Cardiac septum (tissue), 1 donor: ENCODE measurements at regions of chr10 and their contacts with region 1.

Region 1: DNA sequence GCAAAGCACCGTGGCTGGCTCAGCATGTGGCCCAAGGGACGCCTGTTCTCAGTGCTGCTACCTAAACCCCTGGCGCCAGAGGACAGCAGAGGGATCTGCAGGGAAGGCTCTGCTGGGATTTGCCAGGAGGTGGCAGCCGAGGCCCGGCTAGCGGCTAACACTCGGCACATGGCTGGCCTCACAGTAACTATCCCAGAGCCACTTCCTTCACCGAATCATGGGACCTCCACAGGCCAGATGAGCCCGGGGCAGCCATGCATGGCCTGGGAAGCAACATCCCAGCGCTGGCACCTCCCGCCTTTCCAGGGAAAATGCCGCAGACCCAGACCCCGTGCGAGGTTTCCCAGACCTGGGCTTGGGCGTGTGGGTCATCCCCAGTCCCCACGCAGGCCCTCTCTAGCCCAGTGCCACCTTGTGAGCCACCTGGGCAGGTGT is 36.4 kb downstream of the DPYSL4 start:
- DNase-seq: peak; percentile 88

Region 2: GRCh38 chr10:131722525-131723264 is 500.5 kb before region 1 on chr10:
- intact Hi-C with region 1: no loop called
- DNase-seq: peak; percentile 51

Region 3: DNA sequence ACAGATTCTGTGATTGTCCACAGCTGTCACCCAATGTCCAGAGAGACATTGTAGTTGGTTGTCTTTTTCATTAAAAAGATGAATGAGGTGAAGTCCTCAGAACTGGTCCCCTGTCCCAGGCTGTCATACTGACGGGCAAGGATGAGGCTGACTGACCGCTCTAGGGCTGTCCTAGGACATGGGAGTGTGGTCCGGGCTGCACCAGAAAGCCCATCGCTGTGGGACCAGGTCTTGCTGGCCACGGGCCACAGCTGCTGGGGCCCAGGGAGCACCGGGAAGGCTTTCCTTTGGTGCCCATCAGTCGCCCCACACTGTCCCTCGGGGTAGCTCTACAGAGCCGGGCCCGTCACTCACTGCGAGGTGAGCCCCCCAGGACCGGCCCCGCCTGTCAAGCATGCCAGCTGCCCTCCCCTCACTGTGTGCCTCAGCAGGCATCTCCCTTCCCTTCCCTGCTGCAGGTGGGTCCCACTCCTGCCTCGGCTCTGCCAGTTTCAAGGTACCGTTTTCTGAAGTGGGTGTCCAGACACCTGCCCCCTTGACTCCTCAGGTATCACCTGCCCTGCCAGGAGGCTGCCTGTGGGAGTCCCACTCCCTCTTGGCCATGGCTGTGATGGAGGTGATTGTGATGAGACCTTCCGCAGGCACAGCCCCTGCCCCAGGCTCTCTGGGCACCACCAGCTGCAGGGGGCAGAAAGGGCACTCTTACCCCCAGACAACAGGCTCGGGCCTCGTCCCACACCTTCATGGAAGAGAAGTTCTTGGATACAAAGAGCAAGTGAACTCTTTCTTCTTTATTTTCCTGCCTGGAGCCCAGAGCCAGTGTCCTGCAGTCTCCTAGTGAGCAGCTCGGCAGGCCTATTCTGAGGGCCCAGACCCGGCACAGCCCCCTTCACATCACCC is 130.5 kb after region 1 on chr10:
- intact Hi-C with region 1: loop called (anchors 1 kb)
- DNase-seq: no peak

Region 4: GRCh38 chr10:132452631-132453469 is 229.7 kb after region 1 on chr10:
- intact Hi-C with region 1: loop called (anchors 1 kb)
- DNase-seq: peak; percentile 90